ENCODE measurements at regions of chr6 and their contacts with region 1.

Region 1: GRCh38 chr6:3456755-3457466 is at the start of gene SLC22A23:
- DNase-seq: peak; percentile 60
- H3K4me3 ChIP-seq: peak within 1 kb of the TSS; percentile 82 to 93 (median 88)
- H3K27ac ChIP-seq: peak within 1 kb of the TSS; percentile 29
- H3K4me1 ChIP-seq: peaks cover 26% of the 10 kb centered on the region
- H3K27me3 ChIP-seq: no peaks in the 10 kb centered on the region
- CTCF ChIP-seq: peak; percentile 37 to 65
- total RNA-seq, gene SLC22A23: 34.0 to 49.3 TPM

Region 2: GRCh38 chr6:2853761-2854395 is 603.0 kb before region 1 on chr6:
- CTCF ChIA-PET with region 1: no interaction called
- dilution Hi-C with region 1: no loop called
- in situ Hi-C with region 1: no loop called
- intact Hi-C with region 1: no loop called
- DNase-seq: peak; percentile 82
- H3K4me3 ChIP-seq: peak overlapping the region; percentile 1 to 43 (median 12)
- H3K27ac ChIP-seq: peak overlapping the region; percentile 75
- H3K4me1 ChIP-seq: peaks cover 9% of the 10 kb centered on the region
- H3K27me3 ChIP-seq: no peaks in the 10 kb centered on the region
- CTCF ChIP-seq: peak; percentile 22 to 48

Region 3: GRCh38 chr6:3410385-3411360 is 46.2 kb before region 1 on chr6:
- CTCF ChIA-PET with region 1: no interaction called
- dilution Hi-C with region 1: no loop called
- in situ Hi-C with region 1: no loop called
- intact Hi-C with region 1: loop called (anchors 2 kb)
- DNase-seq: no peak
- H3K4me3 ChIP-seq: no peak overlapping the region
- H3K27ac ChIP-seq: no peak overlapping the region
- H3K4me1 ChIP-seq: peaks cover 15% of the 10 kb centered on the region
- H3K27me3 ChIP-seq: no peaks in the 10 kb centered on the region
- CTCF ChIP-seq: peak; percentile 76 to 88

Region 4: DNA sequence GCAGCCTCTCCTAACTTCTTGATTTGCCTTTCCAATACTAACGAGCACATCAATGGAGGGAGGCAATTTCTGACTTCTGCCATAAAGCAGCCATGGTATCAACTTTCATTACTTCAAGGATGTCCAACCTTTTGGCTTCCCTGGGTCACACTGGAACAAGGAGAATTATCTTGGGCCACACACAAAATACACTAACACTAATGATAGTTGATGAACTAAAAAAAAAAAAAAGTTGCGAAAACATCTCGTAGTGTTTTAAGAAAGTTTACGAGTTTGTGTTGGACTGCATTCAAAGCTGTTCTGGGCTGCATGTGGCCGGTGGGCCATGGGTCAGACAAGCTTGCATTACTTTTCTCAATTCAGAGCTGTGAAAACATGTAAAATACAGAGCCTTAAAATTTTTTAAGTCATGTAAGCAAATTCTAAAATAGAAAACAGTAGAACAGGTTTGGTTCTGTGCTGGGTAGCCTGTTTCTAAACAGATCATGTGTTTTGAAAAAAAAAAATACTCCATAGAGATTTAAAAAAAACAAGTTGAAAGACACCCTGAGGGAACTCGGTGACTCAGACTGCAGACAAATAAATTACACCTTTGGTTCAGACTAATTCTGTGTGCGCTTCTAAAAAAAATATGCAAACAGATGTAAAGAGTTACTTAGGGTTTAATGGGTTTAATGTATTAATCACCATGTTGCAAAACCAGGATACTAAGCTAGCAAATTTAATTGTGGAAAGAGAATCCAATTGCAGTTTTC is 43.5 kb after region 1 on chr6:
- CTCF ChIA-PET with region 1: interaction called, 5 read pairs
- dilution Hi-C with region 1: loop called (anchors 5 kb)
- in situ Hi-C with region 1: no loop called
- intact Hi-C with region 1: no loop called
- DNase-seq: peak; percentile 92
- H3K4me3 ChIP-seq: no peak overlapping the region
- H3K27ac ChIP-seq: peak overlapping the region; percentile 23
- H3K4me1 ChIP-seq: peaks cover 17% of the 10 kb centered on the region
- H3K27me3 ChIP-seq: no peaks in the 10 kb centered on the region
- CTCF ChIP-seq: no peak

Region 5: DNA sequence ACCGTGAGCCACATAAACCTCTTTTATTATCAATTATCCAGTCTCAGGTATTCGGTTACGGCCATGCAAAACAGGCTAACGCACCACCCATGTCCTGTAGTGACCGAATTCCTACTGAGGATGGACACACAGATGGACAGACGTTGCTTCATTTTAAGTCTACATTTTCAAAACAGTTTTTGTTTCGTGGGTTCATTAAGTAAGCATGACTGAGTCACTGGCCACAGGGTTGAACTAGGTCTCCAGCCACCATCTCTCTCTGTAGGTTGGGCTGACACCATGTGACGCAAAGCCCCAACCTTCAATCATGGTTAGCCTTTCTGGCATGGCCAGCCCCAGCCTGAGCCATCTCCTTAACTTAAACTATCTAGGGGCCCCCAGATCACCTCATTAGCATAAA is 109.9 kb after region 1 on chr6:
- CTCF ChIA-PET with region 1: no interaction called
- dilution Hi-C with region 1: loop called (anchors 5 kb)
- in situ Hi-C with region 1: no loop called
- intact Hi-C with region 1: no loop called
- DNase-seq: peak; percentile 47
- H3K4me3 ChIP-seq: no peak overlapping the region
- H3K27ac ChIP-seq: no peak overlapping the region
- H3K4me1 ChIP-seq: no peaks in the 10 kb centered on the region
- H3K27me3 ChIP-seq: no peaks in the 10 kb centered on the region
- CTCF ChIP-seq: no peak

Region 6: GRCh38 chr6:3612341-3613041 is 155.6 kb after region 1 on chr6:
- CTCF ChIA-PET with region 1: no interaction called
- dilution Hi-C with region 1: no loop called
- in situ Hi-C with region 1: no loop called
- intact Hi-C with region 1: loop called (anchors 1 kb)
- DNase-seq: peak; percentile 95
- H3K4me3 ChIP-seq: no peak overlapping the region
- H3K27ac ChIP-seq: peak overlapping the region; percentile 69
- H3K4me1 ChIP-seq: peaks cover 31% of the 10 kb centered on the region
- H3K27me3 ChIP-seq: no peaks in the 10 kb centered on the region
- CTCF ChIP-seq: no peak

Measured in mammary epithelial cell (primary cell).